GM10248 (cell line): ENCODE measurements at regions of chr12 and their contacts with region 1.

Region 1: GRCh38 chr12:2853626-2854025 is 3.2 kb downstream of the TEX52 start:
- DNase-seq: peak; percentile 75
- CTCF ChIP-seq: peak; percentile 72

Region 2: GRCh38 chr12:2834581-2835491 is 18.8 kb before region 1 on chr12 and contains the start of gene NRIP2:
- CTCF ChIA-PET with region 1: interaction called, 12 read pairs
- POLR2A ChIA-PET with region 1: no interaction called
- DNase-seq: no peak
- CTCF ChIP-seq: no peak

Region 3: DNA sequence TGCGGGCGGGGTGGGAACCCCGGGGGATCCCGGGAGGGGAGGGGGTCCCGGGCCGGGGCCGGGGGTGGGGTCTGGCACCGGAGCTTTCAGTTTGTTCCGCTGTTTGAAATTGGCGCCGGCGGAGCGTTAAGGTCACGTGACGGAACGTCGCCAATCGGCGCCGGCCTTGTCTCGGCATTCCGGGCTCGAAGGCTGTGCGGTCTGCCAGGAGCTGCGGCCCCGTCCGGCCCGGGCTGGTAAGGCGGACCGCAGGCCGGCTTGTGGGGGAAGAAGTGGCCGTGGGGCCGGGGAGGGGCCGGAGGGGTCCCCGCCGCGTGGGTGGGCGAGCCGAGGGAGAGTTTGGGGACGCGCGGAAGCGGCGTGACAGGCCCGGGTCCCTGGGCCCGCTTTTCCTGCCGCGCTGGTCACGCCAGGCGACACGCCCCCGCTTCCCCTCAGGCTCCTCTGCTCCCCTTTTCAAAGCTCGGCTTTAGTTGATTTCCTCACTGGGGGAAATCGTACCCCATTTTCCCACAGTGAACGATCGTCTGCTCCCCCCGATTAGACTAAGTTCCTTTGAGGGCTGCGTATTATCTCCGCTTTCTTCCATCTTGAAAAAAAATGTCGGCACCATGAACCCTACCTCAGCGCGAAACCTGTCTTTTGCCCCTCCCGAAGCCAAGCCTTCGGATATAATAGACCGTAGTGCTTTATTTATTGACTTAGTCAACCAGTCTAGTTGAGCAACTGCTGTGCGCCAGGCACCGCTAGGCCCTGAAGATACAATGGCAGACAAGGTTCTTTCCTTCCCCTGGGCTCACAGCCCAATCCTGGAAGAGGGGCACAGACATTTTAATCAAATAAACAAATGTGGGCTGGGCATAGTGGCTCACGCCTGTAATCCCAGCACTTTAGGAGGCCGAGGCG is 23.7 kb after region 1 on chr12 and contains the starts of genes FOXM1 and RHNO1:
- CTCF ChIA-PET with region 1: interaction called, 22 read pairs
- POLR2A ChIA-PET with region 1: no interaction called
- DNase-seq: peak; percentile 94
- CTCF ChIP-seq: peak; percentile 11

Region 4: GRCh38 chr12:2944401-2945047 is 90.9 kb after region 1 on chr12:
- CTCF ChIA-PET with region 1: interaction called, 56 read pairs
- POLR2A ChIA-PET with region 1: no interaction called
- DNase-seq: peak; percentile 74
- CTCF ChIP-seq: peak; percentile 68